Heart right ventricle (tissue), 16 donors: ENCODE measurements at regions of chr10 and their contacts with region 1.

Region 1: DNA sequence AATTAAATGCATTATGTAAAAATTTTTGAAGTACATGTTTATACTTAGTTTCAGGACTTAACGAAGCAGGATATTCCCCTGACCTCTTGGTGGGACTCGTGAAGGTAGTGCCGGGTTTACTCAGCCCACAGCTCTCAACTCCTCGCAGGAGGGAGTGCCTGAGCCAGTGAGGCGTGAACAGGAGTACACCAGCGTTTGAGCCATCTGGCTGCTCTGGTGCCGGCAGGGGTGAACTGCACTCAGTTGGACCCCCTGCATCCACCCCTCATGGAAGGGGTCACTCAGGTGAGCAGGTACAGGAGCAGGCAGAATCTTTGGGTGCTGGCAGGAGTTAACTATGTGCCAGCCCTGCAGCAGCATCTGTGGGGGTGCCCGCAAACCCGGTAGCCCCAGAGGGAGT is 625.1 kb upstream of the PCDH15 start:
- DNase-seq: peak in 1 of 2 donors; percentile 7
- ATAC-seq: no peak
- H3K4me3 ChIP-seq: no peak overlapping the region
- H3K27ac ChIP-seq: no peak overlapping the region
- H3K4me1 ChIP-seq: no peaks in the 10 kb centered on the region
- H3K27me3 ChIP-seq: no peaks in the 10 kb centered on the region
- CTCF ChIP-seq: no peak

Region 2: DNA sequence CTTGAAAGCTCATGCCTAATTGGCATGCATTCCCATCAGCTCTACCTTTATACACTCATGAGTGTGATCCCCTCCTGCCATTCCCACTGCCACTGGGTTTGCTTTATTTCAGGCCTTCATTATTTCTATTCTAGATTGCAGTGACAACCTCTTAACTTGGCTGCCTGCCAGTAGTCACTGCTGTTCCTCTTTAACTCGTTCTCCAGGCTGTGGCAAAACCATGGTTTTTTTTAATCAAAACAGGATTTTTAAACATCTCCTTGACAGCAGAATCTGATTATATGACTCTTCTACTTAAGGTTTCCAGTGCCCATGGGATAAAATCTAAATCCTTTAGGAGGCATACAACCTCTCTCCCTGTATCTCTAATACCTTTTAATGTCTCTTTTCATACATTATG is 401.4 kb before region 1 on chr10:
- intact Hi-C with region 1: loop called in 1 of 10 experiments (anchors 5 kb)
- DNase-seq: peak in 1 of 2 donors; percentile 10
- ATAC-seq: no peak
- H3K4me3 ChIP-seq: no peak overlapping the region
- H3K27ac ChIP-seq: no peak overlapping the region
- H3K4me1 ChIP-seq: peaks cover 0 to 6% (median 0%) of the 10 kb centered on the region in 9 donors
- H3K27me3 ChIP-seq: no peaks in the 10 kb centered on the region
- CTCF ChIP-seq: no peak